Activated B cell treated with CpG ODN at 0.5 μM for 24 hours (primary cell): ENCODE measurements at regions of chr11 and their contacts with region 1.

Region 1: GRCh38 chr11:131146827-131147490 is 223.5 kb upstream of the NTM start:
- DNase-seq: no peak
- ATAC-seq: no peak
- H3K4me3 Mint-ChIP-seq: no peak overlapping the region
- H3K27ac Mint-ChIP-seq: no peak overlapping the region
- H3K4me1 Mint-ChIP-seq: no peaks in the 10 kb centered on the region
- H3K27me3 Mint-ChIP-seq: no peaks in the 10 kb centered on the region
- CTCF ChIP-seq: no peak

Region 2: GRCh38 chr11:131041331-131042040 is 105.5 kb before region 1 on chr11:
- CTCF ChIA-PET with region 1: no interaction called
- POLR2A ChIA-PET with region 1: no interaction called
- intact Hi-C with region 1: no loop called
- DNase-seq: no peak
- ATAC-seq: no peak
- H3K4me3 Mint-ChIP-seq: no peak overlapping the region
- H3K27ac Mint-ChIP-seq: no peak overlapping the region
- H3K4me1 Mint-ChIP-seq: no peaks in the 10 kb centered on the region
- H3K27me3 Mint-ChIP-seq: no peaks in the 10 kb centered on the region
- CTCF ChIP-seq: no peak

Region 3: DNA sequence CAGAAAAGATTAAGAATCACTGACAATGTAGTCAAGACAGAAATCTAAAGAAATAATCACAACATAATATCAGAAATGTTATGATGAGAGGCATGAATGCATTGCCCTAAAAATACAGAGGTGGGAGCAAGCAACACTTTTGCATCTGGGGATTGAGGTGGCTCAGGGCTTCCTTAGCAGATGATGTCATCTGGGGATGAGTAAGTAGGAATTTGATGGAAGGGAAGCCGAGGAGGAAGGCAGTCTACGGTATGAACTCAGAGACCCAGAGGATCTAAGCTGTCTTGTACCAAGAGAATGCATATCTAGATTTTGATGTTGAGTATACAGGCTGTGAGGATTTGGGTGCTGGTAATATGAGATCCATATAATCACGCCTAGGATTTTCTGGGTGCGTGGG is 37.7 kb before region 1 on chr11:
- CTCF ChIA-PET with region 1: no interaction called
- POLR2A ChIA-PET with region 1: no interaction called
- intact Hi-C with region 1: loop called (anchors 1 kb)
- DNase-seq: no peak
- ATAC-seq: no peak
- H3K4me3 Mint-ChIP-seq: no peak overlapping the region
- H3K27ac Mint-ChIP-seq: no peak overlapping the region
- H3K4me1 Mint-ChIP-seq: no peaks in the 10 kb centered on the region
- H3K27me3 Mint-ChIP-seq: no peaks in the 10 kb centered on the region
- CTCF ChIP-seq: no peak